ENCODE measurements at regions of chr11 and their contacts with region 1.

Region 1: DNA sequence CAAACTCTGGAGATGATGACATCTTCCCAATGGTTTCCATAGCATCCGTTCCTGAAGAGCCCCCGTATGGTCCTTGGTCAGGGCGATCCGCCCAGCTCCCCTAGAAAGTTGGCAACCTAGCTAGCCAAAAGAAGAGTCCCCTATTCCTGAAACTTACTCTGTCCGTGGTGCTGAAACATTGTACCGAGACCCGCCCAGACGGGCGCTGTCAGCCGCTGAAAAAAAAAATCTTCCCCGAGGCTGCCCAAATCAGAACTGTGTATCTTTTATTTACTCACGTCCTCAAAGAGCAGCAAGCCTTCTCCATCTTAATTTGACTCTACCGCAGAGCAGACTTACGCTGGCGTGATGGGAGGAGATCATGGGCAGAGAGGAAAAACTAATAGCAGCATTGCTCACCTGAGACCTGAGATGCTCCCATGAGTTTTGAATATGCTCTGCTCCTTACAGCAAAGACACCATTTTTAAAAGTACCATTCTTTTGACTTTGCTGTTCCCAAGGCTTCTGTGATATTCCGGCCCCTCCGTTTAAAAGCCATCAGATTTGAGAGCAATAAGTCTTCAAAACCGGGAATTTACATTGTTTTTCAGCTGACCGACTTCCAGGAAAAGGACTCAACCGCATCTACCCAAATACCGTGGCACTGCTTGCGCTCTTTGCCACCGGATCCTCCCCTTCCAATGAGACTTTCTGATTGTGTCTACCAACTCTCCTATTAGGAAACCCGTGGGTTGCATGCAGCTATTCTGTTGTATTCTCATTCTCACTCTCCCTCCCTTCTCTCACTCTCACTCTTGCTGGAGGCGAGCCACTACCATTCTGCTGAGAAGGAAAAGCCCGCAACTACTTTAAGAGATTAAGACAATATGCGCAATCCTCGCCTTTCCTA is at the start of gene SLC17A6:
- DNase-seq: no peak
- ATAC-seq: no peak
- total RNA-seq, gene SLC17A6: not detected

Region 2: DNA sequence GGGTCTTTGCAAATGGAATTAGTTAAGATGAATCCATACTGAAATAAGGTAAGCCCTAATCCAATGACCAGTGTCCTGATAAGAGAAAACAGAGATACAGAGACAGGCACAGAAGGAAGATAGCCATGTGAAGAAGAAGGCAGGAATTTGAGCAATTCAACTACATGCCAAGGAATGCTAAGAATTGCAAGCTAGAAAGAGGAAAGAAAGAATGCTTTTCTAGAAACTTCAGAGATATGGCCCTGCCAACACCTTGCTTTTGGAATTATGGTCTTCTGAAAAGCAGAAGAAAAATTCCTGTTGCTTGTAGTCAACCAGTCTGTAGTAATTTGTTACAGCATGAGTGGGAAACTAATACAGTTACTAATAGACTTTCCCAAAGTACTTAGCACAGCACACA is 111.6 kb after region 1 on chr11:
- intact Hi-C with region 1: no loop called
- DNase-seq: no peak
- ATAC-seq: no peak

Region 3: GRCh38 chr11:22539821-22540256 is 202.0 kb after region 1 on chr11:
- intact Hi-C with region 1: loop called in 1 of 2 experiments (anchors 10 kb)
- DNase-seq: no peak
- ATAC-seq: peak in 1 of 2 donors; percentile 24

Region 4: GRCh38 chr11:22787551-22788162 is 449.8 kb after region 1 on chr11:
- intact Hi-C with region 1: loop called (anchors 1 to 10 kb)
- DNase-seq: no peak
- ATAC-seq: no peak